ENCODE measurements at regions of chr12 and their contacts with region 1.

Region 1: GRCh38 chr12:120228291-120229070 is 27.6 kb upstream of the RPLP0 start:
- DNase-seq: peak; percentile 94

Region 2: DNA sequence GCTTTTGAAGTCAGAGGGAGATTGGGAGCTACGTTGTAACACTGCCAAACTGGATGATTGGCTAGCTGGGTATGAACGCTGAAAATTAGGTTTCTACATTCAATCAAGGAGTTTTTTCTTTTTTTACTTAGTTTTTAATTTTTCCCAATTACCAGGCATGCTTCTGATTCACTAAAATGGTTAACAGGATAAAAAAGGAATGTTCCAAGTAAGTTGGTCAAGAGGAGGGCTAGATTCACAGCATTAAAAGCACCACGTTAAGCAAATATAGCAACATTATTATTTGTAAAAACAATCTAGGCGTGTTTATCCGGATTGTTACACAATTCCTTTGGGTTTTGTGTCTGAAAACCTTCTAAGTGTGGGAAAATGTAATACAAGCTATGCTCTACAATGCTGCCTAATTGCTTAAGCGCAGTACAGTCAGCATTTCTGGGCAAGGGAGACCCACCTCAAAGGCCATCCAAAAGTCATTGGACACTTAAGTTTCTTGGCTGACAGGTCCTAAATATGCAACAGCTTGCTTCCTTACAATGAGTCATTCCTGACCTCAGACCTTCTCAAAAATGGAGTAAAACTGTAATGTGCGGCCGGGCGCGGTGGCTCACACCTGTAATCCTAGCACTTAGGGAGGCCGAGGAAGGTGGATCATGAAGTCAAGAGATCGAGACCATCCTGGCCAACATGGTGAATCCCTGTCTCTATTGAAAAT is 28.7 kb before region 1 on chr12:
- intact Hi-C with region 1: loop called (anchors 1 kb)
- DNase-seq: no peak

Region 3: GRCh38 chr12:120404271-120404670 is 175.8 kb after region 1 on chr12:
- intact Hi-C with region 1: no loop called
- DNase-seq: no peak